K562 (cell line): ENCODE measurements at regions of chr7 and their contacts with region 1.

Region 1: DNA sequence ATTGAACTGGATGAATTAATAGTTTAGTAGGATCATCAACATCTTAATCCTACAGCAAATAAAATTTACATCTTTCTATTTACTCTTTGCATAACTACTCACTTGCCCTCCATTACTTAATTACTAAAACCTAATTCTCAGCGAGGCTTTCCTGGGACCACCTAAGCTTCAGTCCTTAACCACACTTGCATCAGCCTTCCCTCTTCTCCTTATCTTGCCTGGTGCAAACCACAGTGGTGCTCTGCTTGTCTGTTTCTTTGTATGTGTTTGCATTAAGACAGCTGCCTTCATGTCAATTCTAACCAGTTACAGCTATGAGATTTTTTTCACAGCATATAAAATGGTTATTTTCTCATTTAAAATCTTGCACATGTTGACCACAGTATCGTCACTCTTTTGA is 72.6 kb upstream of the ZNF92 start:
- DNase-seq: peak in 1 of 4 experiments; percentile 34
- ATAC-seq: peak; percentile 92
- H3K4me3 ChIP-seq: no peak overlapping the region
- H3K27ac ChIP-seq: no peak overlapping the region
- H3K4me1 ChIP-seq: no peaks in the 10 kb centered on the region; a peak in 1 of 5 replicates
- H3K27me3 ChIP-seq: no peaks in the 10 kb centered on the region
- CTCF ChIP-seq: no peak
- EP300 ChIP-seq: peak; percentile 50
- POLR2A ChIP-seq: no peak
- RAD21 ChIP-seq: no peak

Region 2: DNA sequence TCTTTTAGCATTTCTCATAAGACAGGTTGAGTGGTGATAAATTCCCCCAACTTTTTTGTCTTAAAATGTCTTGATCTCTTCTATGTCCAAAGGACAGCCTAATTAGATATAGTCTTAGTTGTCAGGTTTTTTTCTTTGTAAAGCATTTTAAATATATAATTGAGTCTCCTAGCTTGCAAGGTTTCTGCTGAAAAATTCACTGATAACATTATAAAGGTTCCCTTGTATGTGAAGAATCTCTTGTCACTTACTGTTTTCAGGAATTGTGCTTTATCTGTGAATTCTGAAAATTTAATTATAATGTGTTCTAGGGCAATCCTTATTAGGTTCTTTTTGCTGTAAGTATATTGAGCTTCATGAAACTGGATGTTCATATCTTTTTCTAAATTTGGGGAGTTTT is 24.2 kb before region 1 on chr7:
- CTCF ChIA-PET with region 1: no interaction called
- POLR2A ChIA-PET with region 1: no interaction called
- in situ Hi-C with region 1: no loop called
- intact Hi-C with region 1: loop called (anchors 2 kb)
- DNase-seq: no peak
- ATAC-seq: no peak
- H3K4me3 ChIP-seq: no peak overlapping the region
- H3K27ac ChIP-seq: no peak overlapping the region
- H3K4me1 ChIP-seq: no peaks in the 10 kb centered on the region
- H3K27me3 ChIP-seq: no peaks in the 10 kb centered on the region
- CTCF ChIP-seq: no peak
- EP300 ChIP-seq: no peak
- POLR2A ChIP-seq: no peak
- RAD21 ChIP-seq: no peak

Region 3: DNA sequence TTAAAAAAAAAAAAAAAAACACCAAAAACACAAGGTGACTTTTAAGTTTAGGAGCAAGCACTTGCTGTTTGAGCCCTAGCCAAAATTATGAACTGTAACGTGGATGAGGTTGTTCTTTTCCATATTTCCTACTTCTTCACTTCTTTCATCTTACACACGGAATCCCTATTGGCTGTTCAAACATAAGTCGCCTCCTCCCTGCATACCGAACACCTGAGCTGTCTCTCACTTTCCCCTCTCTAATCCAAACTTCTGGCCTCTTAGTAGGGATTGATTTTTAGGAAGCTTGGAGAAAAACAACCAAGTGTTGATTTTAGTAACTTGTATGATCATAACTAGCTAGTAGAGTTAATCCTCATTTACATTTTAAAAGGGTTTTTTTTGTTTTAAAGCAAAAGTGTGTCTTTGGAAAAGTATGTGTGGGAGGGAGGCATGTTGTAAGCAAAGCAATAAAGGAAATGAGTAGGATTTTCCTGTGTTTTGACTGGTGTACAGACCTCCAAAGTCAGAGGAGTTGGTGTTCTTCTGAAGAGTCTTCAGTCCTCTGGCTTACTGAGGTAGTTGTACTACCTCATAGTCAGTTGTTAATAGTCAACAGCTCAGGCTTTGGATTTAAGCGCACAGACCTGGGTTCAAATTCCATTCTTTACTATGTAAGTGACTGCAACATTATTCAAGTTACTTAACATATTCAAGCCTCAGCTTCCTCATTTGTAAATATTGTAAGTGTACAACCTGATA is 1478.8 kb after region 1 on chr7:
- CTCF ChIA-PET with region 1: no interaction called
- POLR2A ChIA-PET with region 1: no interaction called
- in situ Hi-C with region 1: no loop called
- intact Hi-C with region 1: no loop called
- DNase-seq: no peak
- ATAC-seq: no peak
- H3K4me3 ChIP-seq: no peak overlapping the region
- H3K27ac ChIP-seq: no peak overlapping the region
- H3K4me1 ChIP-seq: no peaks in the 10 kb centered on the region
- H3K27me3 ChIP-seq: no peaks in the 10 kb centered on the region
- CTCF ChIP-seq: no peak
- EP300 ChIP-seq: no peak
- POLR2A ChIP-seq: no peak
- RAD21 ChIP-seq: no peak